HCT116 (cell line): ENCODE measurements at regions of chr20 and their contacts with region 1.

Region 1: GRCh38 chr20:31849455-31849925 is 4.1 kb upstream of the FOXS1 start:
- DNase-seq: no peak
- ATAC-seq: no peak
- H3K4me3 ChIP-seq: no peak overlapping the region
- H3K27ac ChIP-seq: no peak overlapping the region
- H3K4me1 ChIP-seq: no peaks in the 10 kb centered on the region
- H3K27me3 ChIP-seq: no peaks in the 10 kb centered on the region
- CTCF ChIP-seq: no peak
- POLR2A ChIP-seq: no peak
- RAD21 ChIP-seq: no peak

Region 2: GRCh38 chr20:31835977-31836852 is 13.3 kb before region 1 on chr20:
- CTCF ChIA-PET with region 1: interaction called, 20 read pairs
- POLR2A ChIA-PET with region 1: no interaction called
- RAD21 ChIA-PET with region 1: no interaction called
- intact Hi-C with region 1: no loop called
- DNase-seq: peak; percentile 51
- ATAC-seq: peak; percentile 86
- H3K4me3 ChIP-seq: peak overlapping the region in 1 of 2 experiments; percentile 7; a peak in 2 of 4 replicates
- H3K27ac ChIP-seq: no peak overlapping the region; the same call in 1 of the 2 replicates
- H3K4me1 ChIP-seq: peaks cover 17 to 46% of the 10 kb centered on the region in 2 experiments
- H3K27me3 ChIP-seq: no peaks in the 10 kb centered on the region
- CTCF ChIP-seq: no peak
- POLR2A ChIP-seq: no peak
- RAD21 ChIP-seq: no peak

Region 3: DNA sequence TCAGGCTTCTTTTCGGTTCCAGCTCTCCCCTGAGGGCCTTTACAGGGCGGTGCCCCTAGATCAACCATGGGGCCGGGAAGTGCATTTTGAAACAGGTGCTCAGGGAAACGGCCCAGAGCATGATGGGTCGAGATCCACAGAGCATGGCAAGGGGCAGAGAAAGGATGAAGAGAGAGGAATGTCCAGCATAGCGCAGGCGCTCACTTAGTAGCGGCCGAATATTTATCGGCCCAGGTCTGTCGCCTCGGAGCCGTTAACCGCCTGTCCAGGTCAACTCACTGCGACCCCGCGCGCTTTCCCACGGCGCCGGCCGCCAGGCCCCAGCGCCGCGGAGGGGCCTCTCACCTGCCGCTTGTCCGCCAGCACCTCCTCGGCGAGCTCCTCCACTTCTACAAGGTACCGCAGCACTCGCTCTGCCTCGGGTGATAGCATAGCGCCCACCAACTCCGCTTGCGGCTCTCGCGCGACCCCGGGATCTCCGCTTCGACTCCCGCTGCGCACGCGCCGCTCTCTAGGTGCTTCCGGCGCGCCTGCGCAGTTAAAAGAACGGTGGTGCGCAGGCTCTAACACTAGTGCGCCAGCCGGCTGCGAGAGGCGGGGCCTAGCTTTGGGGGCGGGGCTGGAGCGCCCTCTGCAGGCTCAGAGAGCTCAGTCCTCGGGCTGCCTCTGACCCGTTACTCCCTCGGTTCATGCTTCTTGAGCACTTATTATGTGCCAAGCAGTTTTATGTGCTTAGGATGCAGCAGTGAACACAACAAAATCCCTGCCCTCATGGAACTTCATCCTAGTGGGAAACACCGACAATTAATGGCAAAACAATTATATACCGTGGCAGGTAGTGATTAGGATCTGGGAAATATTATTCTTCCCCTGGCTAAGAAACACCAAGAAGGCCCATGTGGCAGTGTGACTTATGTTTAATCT is 102.3 kb after region 1 on chr20 and contains the start of gene PDRG1:
- CTCF ChIA-PET with region 1: interaction called, 44 read pairs
- POLR2A ChIA-PET with region 1: interaction called, 4 read pairs
- RAD21 ChIA-PET with region 1: interaction called, 9 to 14 read pairs
- intact Hi-C with region 1: loop called (anchors 1 kb)
- DNase-seq: peak; percentile 88
- ATAC-seq: peak; percentile 99
- H3K4me3 ChIP-seq: peak within 1 kb of the TSS; percentile 70 to 99
- H3K27ac ChIP-seq: peak within 1 kb of the TSS; percentile 52; the same call in 1 of the 2 replicates
- H3K4me1 ChIP-seq: peaks cover 0 to 13% of the 10 kb centered on the region in 2 experiments; a peak in 2 of 4 replicates
- H3K27me3 ChIP-seq: peaks cover 10% of the 10 kb centered on the region; the same call in 1 of the 2 replicates
- CTCF ChIP-seq: peak; percentile 88 to 95 (median 92)
- POLR2A ChIP-seq: peak; percentile 69
- RAD21 ChIP-seq: peak; percentile 93
- total RNA-seq, gene PDRG1: 18.7 TPM

Region 4: GRCh38 chr20:32091888-32092346 is 242.4 kb after region 1 on chr20:
- CTCF ChIA-PET with region 1: interaction called, 17 read pairs
- POLR2A ChIA-PET with region 1: no interaction called
- RAD21 ChIA-PET with region 1: interaction called in 1 of 2 experiments, 4 read pairs
- intact Hi-C with region 1: loop called (anchors 1 kb)
- DNase-seq: peak; percentile 62
- ATAC-seq: peak; percentile 93
- H3K4me3 ChIP-seq: no peak overlapping the region
- H3K27ac ChIP-seq: no peak overlapping the region
- H3K4me1 ChIP-seq: peaks cover 0 to 2% of the 10 kb centered on the region in 2 experiments; a peak in 1 of 4 replicates
- H3K27me3 ChIP-seq: no peaks in the 10 kb centered on the region; the same call in 1 of the 2 replicates
- CTCF ChIP-seq: peak; percentile 71 to 93 (median 89)
- POLR2A ChIP-seq: no peak
- RAD21 ChIP-seq: peak; percentile 70